PC-9 (cell line): ENCODE measurements at regions of chr2 and their contacts with region 1.

Region 1: GRCh38 chr2:197804049-197804757 is at the start of gene PLCL1:
- DNase-seq: peak; percentile 62 to 79
- H3K4me3 ChIP-seq: peak within 1 kb of the TSS; percentile 41; the same call in 1 of the 2 replicates
- H3K27ac ChIP-seq: no peak within 1 kb of the TSS
- H3K4me1 ChIP-seq: no peaks in the 10 kb centered on the region
- H3K27me3 ChIP-seq: peaks cover 22% of the 10 kb centered on the region
- CTCF ChIP-seq: no peak
- total RNA-seq, gene PLCL1: not detected in 2 replicates

Region 2: GRCh38 chr2:197786010-197786877 is 18.0 kb before region 1 on chr2:
- CTCF ChIA-PET with region 1: no interaction called
- POLR2A ChIA-PET with region 1: no interaction called
- intact Hi-C with region 1: no loop called
- DNase-seq: no peak
- H3K4me3 ChIP-seq: no peak overlapping the region
- H3K27ac ChIP-seq: no peak overlapping the region
- H3K4me1 ChIP-seq: no peaks in the 10 kb centered on the region
- H3K27me3 ChIP-seq: no peaks in the 10 kb centered on the region
- CTCF ChIP-seq: no peak

Region 3: GRCh38 chr2:197821550-197822289 is 17.5 kb after region 1 on chr2:
- CTCF ChIA-PET with region 1: no interaction called
- POLR2A ChIA-PET with region 1: no interaction called
- intact Hi-C with region 1: no loop called
- DNase-seq: no peak
- H3K4me3 ChIP-seq: no peak overlapping the region
- H3K27ac ChIP-seq: no peak overlapping the region
- H3K4me1 ChIP-seq: no peaks in the 10 kb centered on the region
- H3K27me3 ChIP-seq: no peaks in the 10 kb centered on the region
- CTCF ChIP-seq: no peak

Region 4: GRCh38 chr2:198127627-198128026 is 323.4 kb after region 1 on chr2:
- CTCF ChIA-PET with region 1: no interaction called
- POLR2A ChIA-PET with region 1: no interaction called
- intact Hi-C with region 1: loop called (anchors 2 kb)
- DNase-seq: peak in 1 of 2 experiments; percentile 7
- H3K4me3 ChIP-seq: no peak overlapping the region
- H3K27ac ChIP-seq: no peak overlapping the region
- H3K4me1 ChIP-seq: no peaks in the 10 kb centered on the region
- H3K27me3 ChIP-seq: no peaks in the 10 kb centered on the region
- CTCF ChIP-seq: peak; percentile 68

Region 5: GRCh38 chr2:198296665-198297308 is 492.6 kb after region 1 on chr2:
- CTCF ChIA-PET with region 1: interaction called, 5 read pairs
- POLR2A ChIA-PET with region 1: no interaction called
- intact Hi-C with region 1: loop called (anchors 1 kb)
- DNase-seq: peak; percentile 35 to 42
- H3K4me3 ChIP-seq: no peak overlapping the region
- H3K27ac ChIP-seq: no peak overlapping the region
- H3K4me1 ChIP-seq: no peaks in the 10 kb centered on the region
- H3K27me3 ChIP-seq: peaks cover 2% of the 10 kb centered on the region; the same call in 1 of the 2 replicates
- CTCF ChIP-seq: peak; percentile 74